Cardiac septum (tissue), 1 donor: ENCODE measurements at regions of chr7 and their contacts with region 1.

Region 1: DNA sequence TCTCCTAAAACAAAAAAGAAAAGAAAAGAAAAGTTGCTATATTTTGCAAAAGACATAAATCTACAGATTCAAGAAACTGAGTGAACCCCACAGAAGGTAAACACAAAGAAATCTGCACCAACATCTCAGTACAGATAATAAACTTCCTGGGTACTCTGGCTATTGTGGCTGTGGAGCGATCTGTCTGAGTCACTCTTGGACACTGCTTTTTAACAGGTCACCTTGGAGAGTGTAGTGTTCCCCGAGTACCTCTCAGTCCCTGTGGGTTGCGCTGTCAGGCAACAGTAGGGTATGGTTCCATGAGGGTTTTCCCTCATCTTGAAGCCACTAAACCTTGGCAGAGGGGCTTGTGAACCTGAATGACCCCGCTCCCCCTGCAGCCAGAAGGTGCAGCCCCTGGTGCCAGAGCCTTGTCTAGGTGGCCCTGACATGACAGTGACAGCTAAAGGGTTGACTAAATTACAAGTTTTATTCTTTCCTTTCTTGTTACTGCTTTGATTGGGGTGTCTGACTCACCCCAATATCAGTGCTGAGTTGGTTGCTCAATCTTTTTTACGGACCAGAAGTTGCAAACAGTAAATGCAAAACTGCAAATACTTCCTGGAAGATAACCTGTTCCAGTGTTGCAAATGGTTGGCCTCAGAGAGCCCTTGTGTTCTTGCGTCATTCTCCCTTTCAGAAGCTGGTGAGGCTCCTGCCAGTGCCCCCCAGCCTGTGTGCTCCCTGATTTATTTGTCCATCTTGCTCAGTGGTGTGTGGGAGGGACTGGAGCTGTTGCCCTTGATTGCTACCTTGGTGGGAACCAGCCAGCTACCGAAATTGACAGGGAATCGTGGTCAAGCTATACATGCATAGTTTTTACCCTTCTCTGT is 30.6 kb downstream of the POR start:
- DNase-seq: no peak

Region 2: GRCh38 chr7:75835688-75836285 is 109.7 kb before region 1 on chr7:
- intact Hi-C with region 1: no loop called
- DNase-seq: no peak

Region 3: DNA sequence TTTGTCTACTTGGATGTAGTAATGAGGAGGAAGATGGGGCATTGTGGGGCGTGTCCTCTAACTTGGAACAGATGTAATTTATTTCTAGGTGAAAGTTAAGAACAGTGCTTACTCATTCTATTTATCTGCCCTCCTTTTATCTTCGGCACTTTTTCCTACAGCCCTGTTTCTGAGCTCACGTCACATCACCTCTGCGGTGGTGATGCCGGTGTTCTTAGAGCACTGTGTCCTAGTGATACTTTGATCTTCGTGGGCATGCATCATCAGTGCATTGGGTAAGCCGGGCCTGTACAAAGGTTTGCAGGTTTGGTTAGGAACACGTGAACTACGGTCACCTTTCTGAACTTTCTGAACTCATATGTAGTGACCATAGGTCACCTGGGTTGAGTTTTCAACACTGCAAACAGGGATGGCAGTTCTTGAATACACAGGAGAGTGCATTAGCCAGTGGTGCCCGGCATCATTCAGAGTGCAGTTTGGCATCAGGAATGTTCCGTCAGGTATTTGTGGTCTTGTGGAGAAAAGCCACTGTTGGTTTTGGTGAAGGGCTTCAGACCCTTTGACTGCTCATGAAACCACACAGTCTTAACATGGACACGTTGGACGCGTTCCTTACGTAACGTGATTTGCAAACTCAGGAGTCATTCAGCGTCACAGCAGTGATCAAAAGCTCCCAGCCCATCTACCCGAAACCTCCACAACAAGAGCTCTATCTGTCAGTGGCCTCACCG is 24.9 kb before region 1 on chr7:
- intact Hi-C with region 1: no loop called
- DNase-seq: no peak

Region 4: GRCh38 chr7:75994388-75995051 is 49.0 kb after region 1 on chr7 and contains the start of gene TMEM120A:
- intact Hi-C with region 1: loop called (anchors 5 kb)
- DNase-seq: peak; percentile 98
- total RNA-seq, gene TMEM120A: 138 TPM

Region 5: DNA sequence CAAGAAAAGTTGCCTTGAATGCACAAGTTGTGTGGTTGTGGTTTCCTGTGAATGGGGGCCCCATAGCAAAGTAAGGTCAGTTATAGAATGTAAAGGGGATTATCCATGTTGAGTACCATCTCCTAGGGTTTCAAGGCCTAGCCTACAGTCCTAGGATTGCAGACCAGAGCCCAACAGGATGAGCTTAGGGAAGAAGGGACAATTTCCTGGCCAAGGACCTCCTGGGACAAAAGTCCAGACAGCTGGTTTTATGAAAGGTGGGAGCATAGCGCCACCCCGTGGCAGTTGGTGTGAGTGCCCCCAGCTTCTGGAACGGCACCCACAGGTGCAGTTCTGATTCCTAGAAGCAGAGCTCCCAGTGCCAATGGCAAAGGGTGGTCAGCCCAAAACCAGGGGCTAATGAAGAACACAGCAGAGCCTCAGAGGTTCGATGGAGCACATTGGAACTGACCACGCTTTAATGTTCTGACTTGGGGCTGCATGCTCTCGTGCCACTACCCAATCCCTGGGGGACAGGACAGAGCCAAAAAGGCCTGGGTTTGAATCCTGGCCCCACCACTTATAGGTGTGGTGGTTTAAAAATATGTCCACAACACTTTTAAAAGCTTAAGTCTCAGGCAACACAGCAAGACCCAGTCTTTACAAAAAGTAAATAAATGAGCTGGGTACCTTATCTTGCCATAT is 74.6 kb after region 1 on chr7:
- intact Hi-C with region 1: loop called (anchors 5 kb)
- DNase-seq: peak; percentile 93